K562 (cell line): ENCODE measurements at regions of chr20 and their contacts with region 1.

Region 1: DNA sequence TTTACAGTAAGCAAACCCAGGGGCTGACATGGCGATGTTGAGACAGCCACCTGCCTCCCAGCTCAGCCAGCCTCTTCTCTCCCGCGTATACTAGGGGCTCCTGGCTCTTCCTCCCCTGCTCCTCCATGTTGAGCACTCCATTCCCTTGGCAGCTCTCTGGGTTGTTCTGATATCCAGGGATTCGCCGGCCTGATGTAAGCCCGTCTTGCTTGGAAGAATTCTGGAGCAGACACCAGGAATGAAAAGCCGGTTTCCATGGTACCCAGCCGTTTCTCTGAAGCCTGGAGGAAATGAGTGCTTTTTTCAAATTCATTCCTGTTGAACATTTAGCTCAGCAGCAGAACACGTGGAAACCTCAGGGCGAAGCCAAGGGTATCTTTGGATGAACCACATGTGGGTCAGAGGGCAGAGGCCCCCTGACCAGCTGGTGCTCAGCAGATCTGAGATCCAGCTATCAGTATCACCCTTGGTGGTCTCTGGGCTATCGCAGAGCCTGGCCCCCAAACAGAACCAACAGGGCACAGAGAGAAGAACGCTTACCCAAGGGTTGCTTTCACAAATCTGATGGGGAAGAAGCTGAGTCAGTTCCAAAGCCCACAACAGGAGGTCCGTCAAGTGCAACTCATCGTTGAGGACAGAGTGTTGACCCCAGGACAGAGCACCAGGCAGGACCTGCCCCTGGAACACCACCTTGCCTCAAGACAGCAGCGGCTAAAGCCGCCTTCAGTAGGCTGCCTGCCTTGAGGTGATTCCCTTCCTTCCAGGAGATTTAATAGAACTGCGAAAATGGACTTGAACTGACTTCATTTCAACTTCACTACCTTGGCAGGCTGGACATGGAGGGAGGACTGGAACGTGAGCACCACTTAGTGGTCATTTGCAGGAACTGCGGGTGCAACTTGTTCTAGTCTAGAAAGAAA is 96.1 kb upstream of the RIN2 start:
- DNase-seq: peak; percentile 37 to 62 (median 58)
- ATAC-seq: peak; percentile 81
- H3K4me3 ChIP-seq: no peak overlapping the region
- H3K27ac ChIP-seq: no peak overlapping the region
- H3K4me1 ChIP-seq: no peaks in the 10 kb centered on the region; a peak in 1 of 5 replicates
- H3K27me3 ChIP-seq: peaks cover 0 to 3% of the 10 kb centered on the region in 2 experiments; a peak in 1 of 5 replicates
- CTCF ChIP-seq: peak; percentile 66 to 85 (median 82)
- EP300 ChIP-seq: no peak
- POLR2A ChIP-seq: no peak
- RAD21 ChIP-seq: peak; percentile 65 to 77

Region 2: GRCh38 chr20:19205977-19206396 is 456.0 kb before region 1 on chr20:
- CTCF ChIA-PET with region 1: interaction called, 4 read pairs
- POLR2A ChIA-PET with region 1: no interaction called
- in situ Hi-C with region 1: loop called (anchors 10 kb)
- intact Hi-C with region 1: loop called (anchors 2 kb)
- DNase-seq: peak; percentile 43 to 56 (median 48)
- ATAC-seq: peak; percentile 80
- H3K4me3 ChIP-seq: no peak overlapping the region
- H3K27ac ChIP-seq: no peak overlapping the region
- H3K4me1 ChIP-seq: no peaks in the 10 kb centered on the region
- H3K27me3 ChIP-seq: no peaks in the 10 kb centered on the region
- CTCF ChIP-seq: peak; percentile 63 to 80 (median 70)
- EP300 ChIP-seq: no peak
- POLR2A ChIP-seq: no peak
- RAD21 ChIP-seq: peak; percentile 53 to 67

Region 3: DNA sequence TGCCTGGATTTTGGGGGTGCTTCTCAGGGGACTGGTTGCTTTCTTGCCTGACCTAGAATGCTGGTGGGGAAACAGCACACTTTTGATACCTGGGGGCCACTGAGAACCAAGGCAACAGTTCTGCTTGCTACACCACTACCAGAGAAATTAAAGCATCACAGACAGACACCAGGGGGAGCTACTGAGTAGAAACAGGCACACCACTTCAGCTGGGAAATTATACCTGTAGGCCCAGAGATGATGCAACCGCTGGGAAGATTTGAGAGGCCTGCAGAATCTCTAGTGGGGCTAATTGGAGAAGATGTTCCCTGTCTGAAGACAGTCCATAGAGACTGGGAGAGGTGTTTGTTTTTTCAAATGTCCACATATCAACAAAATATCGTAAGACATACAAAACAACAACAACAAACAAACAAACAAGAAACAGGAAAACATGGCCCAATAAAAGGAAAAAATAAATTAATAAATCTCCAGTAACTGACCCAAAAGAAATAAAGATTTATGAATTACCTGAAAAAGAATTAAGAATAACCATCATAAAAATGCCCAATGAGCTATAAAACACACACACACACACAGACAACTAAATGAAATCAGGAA is 33.3 kb before region 1 on chr20:
- CTCF ChIA-PET with region 1: no interaction called
- POLR2A ChIA-PET with region 1: no interaction called
- in situ Hi-C with region 1: no loop called
- intact Hi-C with region 1: loop called (anchors 2 kb)
- DNase-seq: peak; percentile 46 to 60 (median 56)
- ATAC-seq: peak; percentile 90
- H3K4me3 ChIP-seq: no peak overlapping the region
- H3K27ac ChIP-seq: no peak overlapping the region
- H3K4me1 ChIP-seq: no peaks in the 10 kb centered on the region
- H3K27me3 ChIP-seq: no peaks in the 10 kb centered on the region
- CTCF ChIP-seq: peak; percentile 49 to 61 (median 59)
- EP300 ChIP-seq: peak; percentile 42; the same call in 1 of the 2 replicates
- POLR2A ChIP-seq: no peak
- RAD21 ChIP-seq: peak in 1 of 2 experiments; percentile 45; a peak in 2 of 4 replicates

Region 4: DNA sequence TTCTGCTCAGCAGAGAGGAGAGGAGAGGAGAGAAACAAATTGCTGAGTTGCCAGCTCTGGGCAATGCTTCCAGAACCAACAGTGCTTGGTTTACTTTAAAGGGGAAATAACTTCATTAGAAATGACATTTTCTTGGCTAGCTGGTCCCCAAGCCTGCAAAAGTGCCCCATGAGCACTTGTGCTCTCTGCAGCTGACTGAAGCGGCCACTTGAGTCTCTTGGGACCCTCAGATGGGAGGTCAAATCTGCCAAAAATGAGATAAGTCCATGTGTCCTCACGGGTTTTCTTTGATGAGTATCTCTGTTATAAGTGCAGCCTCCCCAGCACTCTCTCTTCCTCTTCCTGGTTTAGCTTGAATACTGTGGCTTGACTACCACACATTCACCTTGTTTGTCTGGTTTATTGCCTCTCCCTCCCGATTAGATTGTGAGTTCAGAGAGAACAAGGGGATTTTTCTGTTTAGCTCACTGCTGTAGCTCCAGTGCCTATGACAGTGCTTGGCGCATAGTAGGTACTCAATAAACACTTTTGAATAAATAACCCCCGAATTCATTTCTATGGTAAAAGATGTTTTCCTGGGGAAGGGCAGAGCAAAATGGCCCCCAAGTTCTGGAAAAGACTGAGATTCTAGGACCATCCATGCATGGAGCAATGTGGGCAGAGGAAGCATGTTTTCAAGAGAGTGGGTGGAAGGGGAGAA is 89.1 kb after region 1 on chr20:
- CTCF ChIA-PET with region 1: no interaction called
- POLR2A ChIA-PET with region 1: no interaction called
- in situ Hi-C with region 1: no loop called
- intact Hi-C with region 1: no loop called
- DNase-seq: no peak
- ATAC-seq: no peak
- H3K4me3 ChIP-seq: no peak overlapping the region
- H3K27ac ChIP-seq: no peak overlapping the region
- H3K4me1 ChIP-seq: no peaks in the 10 kb centered on the region
- H3K27me3 ChIP-seq: no peaks in the 10 kb centered on the region
- CTCF ChIP-seq: no peak
- EP300 ChIP-seq: no peak
- POLR2A ChIP-seq: no peak
- RAD21 ChIP-seq: no peak